ENCODE measurements at regions of chr1 and their contacts with region 1.

Region 1: GRCh38 chr1:119613769-119614720 is 34.0 kb downstream of the ZNF697 start:
- DNase-seq: peak; percentile 62 to 90 (median 79)
- H3K4me3 ChIP-seq: no peak overlapping the region
- H3K27ac ChIP-seq: peak overlapping the region in 1 of 59 donors; percentile 26
- H3K27me3 ChIP-seq: no peaks in the 10 kb centered on the region
- CTCF ChIP-seq: peak; percentile 44 to 96 (median 84)

Region 2: DNA sequence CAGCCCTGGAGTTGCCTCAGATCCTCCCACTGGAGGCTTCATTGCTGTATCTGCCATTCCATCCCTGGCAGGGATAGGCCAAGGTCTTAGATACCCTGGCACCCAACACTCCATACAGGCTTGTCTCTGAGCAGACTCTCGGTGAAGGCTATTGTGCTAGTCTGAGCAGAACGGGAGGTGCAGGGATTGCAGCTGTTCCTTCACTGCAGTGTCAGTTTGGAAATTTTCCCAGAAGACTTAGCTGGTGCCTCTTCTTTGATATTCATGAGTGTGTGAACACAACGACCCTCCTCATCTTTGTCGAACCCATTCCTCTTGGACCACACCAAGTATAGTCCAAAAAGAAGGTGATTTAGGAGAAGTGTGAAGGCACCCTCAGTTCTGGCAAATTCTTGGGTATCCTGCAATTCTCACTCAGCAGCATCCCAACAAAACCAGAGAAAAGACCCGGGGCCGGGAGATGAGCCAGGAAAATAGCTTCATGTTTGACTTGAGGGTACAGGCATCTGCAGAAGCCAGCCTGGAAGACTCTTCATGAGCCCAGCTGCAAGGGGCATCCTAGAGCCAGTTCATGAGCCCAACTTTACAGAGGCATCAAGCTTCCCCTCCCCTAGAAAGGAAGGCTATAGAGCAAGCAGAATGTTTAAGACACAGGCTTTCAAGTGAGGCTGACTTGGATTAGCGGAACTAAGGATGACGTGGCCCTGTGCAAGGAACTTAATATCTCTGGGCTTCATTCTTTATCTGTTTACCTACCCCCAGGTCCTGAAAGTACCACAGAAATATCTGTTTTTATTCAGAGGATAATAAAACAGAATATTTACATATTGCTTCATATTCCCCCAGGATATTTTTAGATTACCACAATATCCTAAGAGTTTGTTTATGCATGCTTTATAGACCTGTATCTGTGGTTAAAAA is 284.2 kb before region 1 on chr1:
- intact Hi-C with region 1: no loop called
- DNase-seq: no peak
- H3K4me3 ChIP-seq: no peak overlapping the region
- H3K27ac ChIP-seq: no peak overlapping the region
- H3K27me3 ChIP-seq: no peaks in the 10 kb centered on the region
- CTCF ChIP-seq: no peak

Region 3: DNA sequence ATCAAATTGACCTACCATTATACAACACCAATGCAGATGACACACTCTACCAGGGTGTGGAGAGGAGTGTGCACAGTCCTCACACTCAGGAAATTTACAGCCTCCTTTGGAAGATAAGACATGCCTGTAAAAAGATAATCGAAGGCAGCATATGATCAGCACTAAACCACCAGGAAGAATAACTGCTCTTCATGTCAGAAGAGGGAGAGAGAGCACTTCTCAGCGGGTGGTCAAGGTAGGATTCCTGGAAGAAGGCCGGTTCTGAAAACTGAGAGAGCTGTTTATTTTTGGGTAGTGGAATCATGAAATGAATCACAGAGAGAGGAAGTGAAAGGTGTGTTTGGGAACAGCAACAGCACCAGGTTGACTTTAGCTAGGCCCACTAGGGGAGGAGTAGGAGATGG is 48.0 kb after region 1 on chr1:
- intact Hi-C with region 1: loop called (anchors 2 kb)
- DNase-seq: no peak
- H3K4me3 ChIP-seq: no peak overlapping the region
- H3K27ac ChIP-seq: no peak overlapping the region
- H3K27me3 ChIP-seq: peaks cover 0 to 3% (median 0%) of the 10 kb centered on the region in 45 donors
- CTCF ChIP-seq: no peak

Region 4: DNA sequence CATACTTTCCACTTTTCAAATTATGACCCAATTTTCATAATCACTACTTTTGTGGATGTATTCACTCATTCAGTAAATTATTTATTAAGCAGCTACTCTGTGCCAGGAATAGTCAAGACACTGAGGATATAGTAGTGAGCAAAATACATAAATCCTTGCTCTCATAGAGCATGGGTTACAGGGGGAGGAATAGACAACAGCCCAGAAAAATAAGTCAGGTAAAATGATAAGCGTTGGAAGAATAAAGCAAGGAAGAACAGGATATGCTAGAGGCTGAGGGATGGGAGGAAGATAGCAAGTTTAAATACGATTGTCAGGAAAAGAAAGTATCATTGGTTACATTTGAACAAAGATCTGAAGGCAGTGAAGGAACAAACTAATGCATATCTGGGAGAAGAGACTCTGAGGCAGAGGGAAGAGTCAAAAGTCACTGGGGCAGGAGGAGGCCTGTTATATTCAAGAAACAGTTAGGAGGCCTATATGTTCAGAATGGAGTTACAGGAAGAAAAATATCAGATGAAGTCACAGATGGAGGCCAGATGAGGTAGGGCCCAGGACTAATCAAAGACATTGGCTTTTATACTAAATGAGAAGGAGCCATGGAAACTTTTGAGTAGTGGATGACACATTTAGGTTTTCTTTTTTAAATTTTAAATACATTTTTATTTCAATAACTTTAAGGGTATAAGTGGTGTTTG is 519.3 kb after region 1 on chr1:
- intact Hi-C with region 1: no loop called
- DNase-seq: no peak
- H3K4me3 ChIP-seq: no peak overlapping the region
- H3K27ac ChIP-seq: no peak overlapping the region
- H3K27me3 ChIP-seq: no peaks in the 10 kb centered on the region
- CTCF ChIP-seq: no peak

Measured in dorsolateral prefrontal cortex (tissue), 120 donors.